ENCODE measurements at regions of chr9 and their contacts with region 1.

Region 1: GRCh38 chr9:3478549-3478953 is 47.2 kb downstream of the RFX3 start:
- DNase-seq: peak; percentile 37
- H3K4me3 ChIP-seq: no peak overlapping the region
- H3K27ac ChIP-seq: no peak overlapping the region
- H3K4me1 ChIP-seq: peaks cover 9% of the 10 kb centered on the region
- H3K27me3 ChIP-seq: no peaks in the 10 kb centered on the region
- CTCF ChIP-seq: no peak

Region 2: GRCh38 chr9:3461237-3461636 is 17.3 kb before region 1 on chr9:
- CTCF ChIA-PET with region 1: interaction called, 12 read pairs
- POLR2A ChIA-PET with region 1: no interaction called
- intact Hi-C with region 1: no loop called
- DNase-seq: no peak
- H3K4me3 ChIP-seq: no peak overlapping the region
- H3K27ac ChIP-seq: no peak overlapping the region
- H3K4me1 ChIP-seq: peaks cover 14% of the 10 kb centered on the region
- H3K27me3 ChIP-seq: no peaks in the 10 kb centered on the region
- CTCF ChIP-seq: no peak

Region 3: DNA sequence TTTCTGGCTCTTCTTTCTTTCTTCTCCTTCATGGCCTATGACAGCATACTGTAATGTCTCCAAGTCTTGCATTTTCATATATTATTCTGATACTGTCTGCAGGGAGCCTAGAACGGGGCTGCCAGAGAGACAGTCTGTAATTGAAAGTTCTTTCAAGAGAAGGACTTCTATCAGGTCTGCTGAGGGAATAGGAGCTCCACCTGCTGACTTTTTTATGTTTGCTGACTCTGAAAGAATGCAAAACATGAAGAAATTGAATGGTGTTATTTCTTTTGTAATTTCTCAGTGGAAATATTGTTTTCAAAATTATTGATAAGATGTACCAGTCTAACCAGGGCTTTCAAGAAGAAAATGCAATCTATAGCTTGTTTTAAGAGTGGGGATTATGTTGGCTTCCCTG is 169.1 kb after region 1 on chr9:
- CTCF ChIA-PET with region 1: no interaction called
- POLR2A ChIA-PET with region 1: no interaction called
- intact Hi-C with region 1: loop called (anchors 10 kb)
- DNase-seq: no peak
- H3K4me3 ChIP-seq: no peak overlapping the region
- H3K27ac ChIP-seq: no peak overlapping the region
- H3K4me1 ChIP-seq: no peaks in the 10 kb centered on the region
- H3K27me3 ChIP-seq: no peaks in the 10 kb centered on the region
- CTCF ChIP-seq: peak; percentile 28; the same call in 1 of the 2 replicates